Aorta (tissue), 5 donors: ENCODE measurements at regions of chr10 and their contacts with region 1.

Region 1: DNA sequence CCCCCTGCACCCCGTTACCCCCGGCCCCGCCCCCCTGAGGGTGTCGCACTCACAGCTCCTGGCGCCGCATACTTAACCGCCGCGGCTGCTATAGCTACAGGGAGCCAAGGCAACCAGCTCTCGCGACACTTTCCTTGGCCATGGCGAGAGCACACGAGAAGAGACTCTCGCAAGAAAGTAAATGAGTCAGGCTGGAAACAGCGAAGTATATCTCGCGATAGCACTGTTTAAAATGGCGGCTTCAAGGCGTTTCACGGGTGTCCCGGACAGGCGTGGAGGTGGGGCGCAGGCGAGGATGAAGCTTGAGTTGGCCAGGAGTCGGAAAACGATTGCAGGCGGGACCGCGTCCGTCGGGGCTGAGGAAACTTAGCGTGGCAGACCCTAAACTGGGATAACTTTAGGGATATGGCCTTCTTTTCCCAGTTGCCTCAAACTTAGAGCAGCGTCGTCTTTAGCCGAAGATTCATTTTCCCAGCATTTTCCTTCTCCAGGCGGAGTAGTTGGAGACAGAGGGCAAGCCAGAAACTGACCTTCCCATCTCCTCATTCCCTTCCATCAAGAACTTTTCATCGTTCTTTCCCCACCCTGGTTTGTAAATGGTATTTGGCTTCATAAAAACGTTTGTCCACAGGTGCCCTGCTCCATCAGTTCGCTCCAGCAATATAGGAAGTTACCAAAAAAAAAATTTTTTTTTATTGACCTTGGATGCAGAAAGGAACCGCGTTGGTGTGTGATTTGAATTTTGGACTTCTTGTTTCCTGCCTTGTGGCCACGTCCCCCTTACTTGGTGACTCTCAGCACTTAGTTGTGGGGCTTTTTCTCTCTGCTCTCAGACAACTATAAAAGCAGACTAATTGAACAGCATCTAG is 15.2 kb downstream of the MYOZ1 start:
- DNase-seq: peak; percentile 96 to 97
- ATAC-seq: peak; percentile 98
- H3K4me3 ChIP-seq: peak overlapping the region; percentile 37 to 74
- H3K27ac ChIP-seq: peak overlapping the region in 1 of 2 donors; percentile 30
- H3K4me1 ChIP-seq: no peaks in the 10 kb centered on the region
- H3K27me3 ChIP-seq: no peaks in the 10 kb centered on the region

Region 2: DNA sequence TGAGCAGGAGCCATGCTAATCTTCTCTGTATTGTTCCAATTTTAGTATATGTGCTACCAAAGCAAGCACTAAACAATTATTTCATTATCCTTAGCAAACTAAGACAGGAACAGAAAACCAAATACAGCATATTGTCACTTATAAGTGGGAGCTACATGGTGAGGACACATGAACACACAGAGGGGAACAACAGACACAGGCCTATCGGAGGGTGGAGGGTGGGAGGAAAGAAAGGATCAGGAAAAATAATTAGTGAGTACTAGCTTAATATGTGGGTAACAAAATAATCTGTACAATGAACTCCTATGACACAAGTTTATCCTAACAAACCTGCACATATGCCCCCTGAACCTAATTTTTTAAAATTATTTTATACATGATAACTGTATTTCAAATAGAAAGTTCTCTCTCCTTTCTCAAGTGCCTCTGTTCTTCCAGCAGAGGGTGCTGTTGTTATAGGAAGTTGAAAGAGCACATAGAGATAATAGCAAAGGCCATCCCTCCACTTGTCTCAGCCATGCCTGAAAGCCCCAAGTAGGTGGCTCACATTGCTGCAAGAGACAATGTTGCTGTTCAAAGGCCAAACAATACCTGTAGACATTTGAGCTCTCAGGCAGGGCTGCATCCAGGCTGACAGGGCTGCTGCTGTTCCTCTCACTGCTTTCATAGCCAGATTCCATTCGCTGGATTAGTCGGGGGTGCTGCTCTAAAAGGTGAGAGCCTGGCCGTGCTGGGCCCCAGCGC is 96.9 kb before region 1 on chr10:
- intact Hi-C with region 1: loop called in 1 of 2 experiments (anchors 5 kb)
- DNase-seq: no peak
- ATAC-seq: peak; percentile 82
- H3K4me3 ChIP-seq: no peak overlapping the region
- H3K27ac ChIP-seq: no peak overlapping the region
- H3K4me1 ChIP-seq: no peaks in the 10 kb centered on the region
- H3K27me3 ChIP-seq: no peaks in the 10 kb centered on the region

Region 3: DNA sequence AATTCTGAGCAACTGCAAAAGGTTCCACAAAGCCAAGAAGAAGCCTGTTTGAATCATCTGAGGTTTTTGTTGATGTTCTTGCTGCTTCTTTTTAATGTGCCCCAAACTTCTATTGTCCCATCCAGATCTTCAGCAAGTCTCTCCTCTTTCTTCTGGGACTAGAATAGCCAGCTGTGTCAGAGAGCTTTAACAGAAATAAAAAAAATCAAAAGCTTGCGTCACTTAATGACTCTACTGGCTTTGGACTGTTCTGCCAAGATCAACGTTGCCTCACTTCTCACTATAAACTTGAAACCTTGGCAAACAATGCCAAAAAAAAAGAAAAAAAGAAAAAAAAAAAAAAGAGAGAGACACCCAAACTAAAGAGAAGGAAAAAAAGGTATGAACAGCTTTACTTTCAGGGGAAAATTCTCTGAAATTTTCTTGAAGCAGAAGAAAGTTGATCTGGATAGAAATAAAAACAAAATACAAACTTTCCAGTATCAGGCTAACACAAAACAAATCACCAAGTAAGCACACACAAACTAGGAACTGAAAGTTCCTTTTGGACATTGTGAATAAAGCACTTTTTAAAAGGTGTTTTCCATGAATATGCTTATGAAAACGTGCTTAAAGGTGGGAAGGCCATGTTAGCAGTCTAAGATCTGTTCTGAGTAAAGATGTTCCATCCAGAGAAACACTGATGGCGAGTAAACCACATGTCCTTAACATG is 49.8 kb before region 1 on chr10:
- intact Hi-C with region 1: loop called (anchors 5 kb)
- DNase-seq: no peak
- ATAC-seq: peak; percentile 87
- H3K4me3 ChIP-seq: peak overlapping the region in 1 of 2 donors; percentile 41
- H3K27ac ChIP-seq: peak overlapping the region; percentile 42 to 97
- H3K4me1 ChIP-seq: peaks cover 2 to 3% of the 10 kb centered on the region in 2 donors
- H3K27me3 ChIP-seq: no peaks in the 10 kb centered on the region